ENCODE measurements at regions of chr5 and their contacts with region 1.

Region 1: DNA sequence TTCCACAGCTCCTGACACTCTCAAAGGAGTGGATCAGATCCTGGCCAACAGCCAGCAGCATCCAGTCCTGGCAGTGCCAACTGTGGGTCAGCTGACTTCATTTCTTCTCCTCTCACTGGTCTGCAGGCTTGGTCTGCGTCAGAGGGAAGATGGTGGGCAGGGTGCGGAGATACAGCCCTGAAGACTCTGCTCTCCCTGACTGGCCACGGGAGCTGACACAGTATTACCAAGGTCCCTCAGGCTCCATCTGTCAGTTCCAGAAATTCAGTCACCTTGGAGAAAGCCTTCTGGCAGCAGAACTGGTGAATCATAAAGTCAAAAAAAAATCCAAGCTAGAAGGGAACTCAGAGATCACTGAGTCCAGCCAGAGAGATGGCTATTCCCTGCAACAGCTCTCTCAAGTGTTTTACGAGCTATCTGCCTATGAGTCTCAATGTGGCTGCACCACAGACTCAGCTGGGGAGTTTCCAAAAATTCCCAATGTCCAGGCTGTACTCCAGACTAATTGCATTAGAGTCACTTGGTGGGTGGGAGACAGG is 28.0 kb downstream of the C1QTNF2 start:
- DNase-seq: no peak
- H3K4me3 ChIP-seq: no peak overlapping the region
- H3K27ac ChIP-seq: no peak overlapping the region
- H3K4me1 ChIP-seq: peaks cover 0 to 10% (median 5%) of the 10 kb centered on the region in 4 experiments
- H3K27me3 ChIP-seq: no peaks in the 10 kb centered on the region

Region 2: GRCh38 chr5:159660401-159660800 is 682.1 kb before region 1 on chr5:
- CTCF ChIA-PET with region 1: no interaction called
- POLR2A ChIA-PET with region 1: no interaction called
- DNase-seq: no peak
- H3K4me3 ChIP-seq: no peak overlapping the region
- H3K27ac ChIP-seq: no peak overlapping the region
- H3K4me1 ChIP-seq: no peaks in the 10 kb centered on the region
- H3K27me3 ChIP-seq: peaks cover 0 to 1% (median 0%) of the 10 kb centered on the region in 5 experiments

Region 3: GRCh38 chr5:160021831-160022446 is 320.5 kb before region 1 on chr5:
- CTCF ChIA-PET with region 1: interaction called, 17 read pairs
- POLR2A ChIA-PET with region 1: no interaction called
- DNase-seq: peak; percentile 65 to 81 (median 70)
- H3K4me3 ChIP-seq: no peak overlapping the region
- H3K27ac ChIP-seq: no peak overlapping the region
- H3K4me1 ChIP-seq: no peaks in the 10 kb centered on the region
- H3K27me3 ChIP-seq: no peaks in the 10 kb centered on the region

Region 4: DNA sequence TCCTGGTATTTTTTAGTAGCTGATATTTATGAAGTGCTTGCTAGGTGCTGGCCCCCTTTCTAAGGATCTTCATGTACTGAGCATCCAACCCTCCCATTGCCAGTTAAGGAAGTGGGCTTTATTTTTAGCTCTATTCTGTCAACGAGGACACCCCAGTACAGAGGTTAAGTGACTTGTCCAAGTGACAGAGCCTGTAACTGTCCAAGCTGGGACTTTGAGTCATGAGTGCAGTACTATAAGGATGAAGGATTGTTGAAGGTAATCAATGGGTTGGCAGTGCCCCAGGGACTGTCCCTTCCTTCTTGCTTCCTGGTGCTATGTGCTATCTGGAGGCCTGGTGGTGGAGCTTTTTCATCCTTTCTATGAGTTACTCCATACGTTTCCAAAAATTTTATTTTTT is 131.1 kb before region 1 on chr5:
- CTCF ChIA-PET with region 1: interaction called, 11 read pairs
- POLR2A ChIA-PET with region 1: no interaction called
- DNase-seq: no peak
- H3K4me3 ChIP-seq: no peak overlapping the region
- H3K27ac ChIP-seq: no peak overlapping the region
- H3K4me1 ChIP-seq: no peaks in the 10 kb centered on the region
- H3K27me3 ChIP-seq: no peaks in the 10 kb centered on the region

Region 5: GRCh38 chr5:160245506-160246086 is 96.9 kb before region 1 on chr5:
- CTCF ChIA-PET with region 1: interaction called, 57 read pairs
- POLR2A ChIA-PET with region 1: no interaction called
- DNase-seq: no peak
- H3K4me3 ChIP-seq: no peak overlapping the region
- H3K27ac ChIP-seq: no peak overlapping the region
- H3K4me1 ChIP-seq: peaks cover 0 to under 1% (median 0%) of the 10 kb centered on the region in 4 experiments
- H3K27me3 ChIP-seq: no peaks in the 10 kb centered on the region

Region 6: DNA sequence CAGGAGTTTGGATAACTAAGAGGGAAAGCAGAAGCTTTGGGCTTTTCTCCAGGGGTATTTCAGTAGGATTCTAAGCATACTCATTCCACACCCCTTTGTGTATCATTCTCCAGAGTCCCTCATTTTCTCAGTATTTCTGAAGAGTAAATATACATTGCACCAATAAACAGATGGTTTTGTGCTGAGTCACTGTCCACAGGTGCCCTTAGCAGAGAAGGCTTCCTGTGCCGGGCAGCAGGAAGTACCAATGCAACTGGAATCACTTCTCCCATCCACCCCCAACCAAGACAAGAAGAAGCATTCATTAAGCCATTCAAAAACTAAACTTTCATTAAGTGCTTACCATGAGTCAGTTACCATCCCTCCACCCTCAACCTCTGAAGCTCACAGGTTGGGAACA is 26.5 kb before region 1 on chr5:
- CTCF ChIA-PET with region 1: interaction called, 11 read pairs
- POLR2A ChIA-PET with region 1: no interaction called
- DNase-seq: peak in 2 of 3 donors; percentile 47 to 51
- H3K4me3 ChIP-seq: no peak overlapping the region
- H3K27ac ChIP-seq: no peak overlapping the region
- H3K4me1 ChIP-seq: peaks cover 7 to 43% (median 19%) of the 10 kb centered on the region in 4 experiments
- H3K27me3 ChIP-seq: peaks cover 0 to 31% (median 7%) of the 10 kb centered on the region in 5 experiments

Region 7: GRCh38 chr5:160421625-160422258 is 79.3 kb after region 1 on chr5 and contains the start of gene PTTG1:
- CTCF ChIA-PET with region 1: no interaction called
- POLR2A ChIA-PET with region 1: no interaction called
- DNase-seq: peak; percentile 98 to 99 (median 98)
- H3K4me3 ChIP-seq: peak within 1 kb of the TSS; percentile 62 to 94 (median 76)
- H3K27ac ChIP-seq: peak within 1 kb of the TSS; percentile 71 to 85
- H3K4me1 ChIP-seq: peaks cover 33 to 78% (median 51%) of the 10 kb centered on the region in 4 experiments
- H3K27me3 ChIP-seq: no peaks in the 10 kb centered on the region

Measured in common myeloid progenitor, CD34-positive (primary cell).